Mammary epithelial cell (primary cell): ENCODE measurements at regions of chr5 and their contacts with region 1.

Region 1: DNA sequence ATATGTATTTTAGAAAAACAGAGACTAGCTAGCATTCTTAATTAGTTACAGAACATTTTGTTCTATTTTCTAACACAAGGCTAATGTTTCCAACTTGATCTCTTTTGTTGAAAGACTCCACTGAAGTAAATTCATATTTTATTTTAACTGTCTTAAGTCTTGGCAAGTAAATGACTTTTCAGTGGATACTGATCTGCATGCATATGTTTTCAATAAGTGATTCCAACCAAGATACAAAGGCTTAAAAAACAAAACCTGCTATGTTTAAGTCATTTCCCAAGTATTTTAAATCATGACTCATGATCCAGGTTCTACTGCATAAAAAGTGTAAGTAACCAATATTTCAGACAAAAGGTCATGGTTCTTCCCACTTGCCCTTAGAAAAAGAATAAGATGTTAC is 5.7 kb downstream of the CDO1 start:
- DNase-seq: no peak
- H3K4me3 ChIP-seq: no peak overlapping the region
- H3K27ac ChIP-seq: no peak overlapping the region
- H3K4me1 ChIP-seq: peaks cover 2% of the 10 kb centered on the region
- H3K27me3 ChIP-seq: peaks cover 19% of the 10 kb centered on the region
- CTCF ChIP-seq: no peak

Region 2: GRCh38 chr5:115709585-115709984 is 101.2 kb before region 1 on chr5:
- CTCF ChIA-PET with region 1: no interaction called
- dilution Hi-C with region 1: no loop called
- in situ Hi-C with region 1: no loop called
- intact Hi-C with region 1: no loop called
- DNase-seq: no peak
- H3K4me3 ChIP-seq: no peak overlapping the region
- H3K27ac ChIP-seq: no peak overlapping the region
- H3K4me1 ChIP-seq: no peaks in the 10 kb centered on the region
- H3K27me3 ChIP-seq: no peaks in the 10 kb centered on the region
- CTCF ChIP-seq: no peak

Region 3: DNA sequence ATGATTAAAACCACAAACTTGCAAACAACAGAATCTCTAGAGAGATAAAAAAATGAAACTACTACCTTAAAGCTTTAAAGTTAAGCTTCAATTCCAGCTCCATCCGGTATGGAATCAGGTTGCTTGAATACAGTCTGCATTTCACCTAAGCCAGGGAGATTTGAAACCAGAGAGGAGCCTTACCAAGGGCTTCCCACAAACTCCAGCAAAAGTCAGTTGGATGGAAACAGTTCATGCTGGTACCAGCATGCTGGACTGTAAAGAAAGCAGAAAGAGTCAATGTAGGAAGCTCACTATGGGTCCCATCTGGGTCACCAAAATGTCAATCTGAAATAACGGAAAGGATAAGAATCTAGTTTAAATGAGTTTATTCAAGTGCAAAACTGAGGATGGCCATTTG is 59.6 kb before region 1 on chr5:
- CTCF ChIA-PET with region 1: no interaction called
- dilution Hi-C with region 1: loop called (anchors 5 kb)
- in situ Hi-C with region 1: no loop called
- intact Hi-C with region 1: no loop called
- DNase-seq: no peak
- H3K4me3 ChIP-seq: no peak overlapping the region
- H3K27ac ChIP-seq: no peak overlapping the region
- H3K4me1 ChIP-seq: no peaks in the 10 kb centered on the region
- H3K27me3 ChIP-seq: peaks cover 6% of the 10 kb centered on the region
- CTCF ChIP-seq: no peak

Region 4: GRCh38 chr5:115888027-115888426 is 77.3 kb after region 1 on chr5:
- CTCF ChIA-PET with region 1: no interaction called
- dilution Hi-C with region 1: no loop called
- in situ Hi-C with region 1: no loop called
- intact Hi-C with region 1: no loop called
- DNase-seq: no peak
- H3K4me3 ChIP-seq: no peak overlapping the region
- H3K27ac ChIP-seq: no peak overlapping the region
- H3K4me1 ChIP-seq: no peaks in the 10 kb centered on the region
- H3K27me3 ChIP-seq: no peaks in the 10 kb centered on the region
- CTCF ChIP-seq: peak in 1 of 2 donors; percentile 9